AG04449 (cell line): ENCODE measurements at regions of chr3 and their contacts with region 1.

Region 1: GRCh38 chr3:126245811-126246727 is 65.7 kb upstream of the ALDH1L1 start:
- DNase-seq: no peak
- H3K4me3 ChIP-seq: no peak overlapping the region
- CTCF ChIP-seq: peak; percentile 59

Region 2: GRCh38 chr3:126259411-126260391 is 13.6 kb after region 1 on chr3:
- CTCF ChIA-PET with region 1: interaction called, 29 read pairs
- POLR2A ChIA-PET with region 1: no interaction called
- DNase-seq: no peak
- H3K4me3 ChIP-seq: no peak overlapping the region
- CTCF ChIP-seq: peak; percentile 60

Region 3: DNA sequence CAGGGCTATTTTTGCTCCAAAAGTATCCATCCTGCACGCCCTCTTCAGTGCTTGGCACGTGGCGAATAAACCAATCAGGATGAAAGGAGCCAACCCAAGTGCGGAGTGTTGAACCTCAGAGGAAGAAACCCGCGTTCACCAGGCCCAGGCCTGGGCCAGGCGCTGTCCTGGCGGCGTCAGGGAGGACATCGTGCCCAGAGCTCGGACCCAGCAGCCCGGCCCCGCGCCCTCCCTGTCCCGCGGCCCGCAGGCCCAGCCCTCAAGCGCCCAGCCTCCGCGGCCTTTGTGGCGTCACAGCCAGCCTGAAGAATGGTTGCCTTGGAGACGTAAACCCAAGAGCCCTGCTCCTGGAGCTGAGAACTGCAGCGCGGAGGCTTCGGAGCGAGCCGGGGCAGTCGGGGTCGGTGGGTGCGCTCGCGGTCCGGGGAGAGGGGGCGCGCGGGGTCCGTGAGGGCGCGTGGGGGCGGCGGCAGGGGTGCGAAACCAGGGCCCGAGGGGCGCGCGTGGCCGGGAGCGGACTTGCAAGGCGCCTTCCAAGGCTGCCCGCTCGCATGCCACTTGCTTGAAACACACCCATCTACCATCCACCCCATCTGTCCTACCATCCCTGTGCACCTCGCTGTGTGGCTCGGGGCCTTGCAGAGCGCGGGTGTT is 148.6 kb after region 1 on chr3 and contains the start of gene CFAP100:
- CTCF ChIA-PET with region 1: interaction called, 41 read pairs
- POLR2A ChIA-PET with region 1: no interaction called
- DNase-seq: no peak
- H3K4me3 ChIP-seq: 0 out of 2 replicates have a peak within 1 kb of the TSS, but pooled peaks have one; percentile 1
- CTCF ChIP-seq: no peak